ENCODE measurements at regions of chr11 and their contacts with region 1.

Region 1: DNA sequence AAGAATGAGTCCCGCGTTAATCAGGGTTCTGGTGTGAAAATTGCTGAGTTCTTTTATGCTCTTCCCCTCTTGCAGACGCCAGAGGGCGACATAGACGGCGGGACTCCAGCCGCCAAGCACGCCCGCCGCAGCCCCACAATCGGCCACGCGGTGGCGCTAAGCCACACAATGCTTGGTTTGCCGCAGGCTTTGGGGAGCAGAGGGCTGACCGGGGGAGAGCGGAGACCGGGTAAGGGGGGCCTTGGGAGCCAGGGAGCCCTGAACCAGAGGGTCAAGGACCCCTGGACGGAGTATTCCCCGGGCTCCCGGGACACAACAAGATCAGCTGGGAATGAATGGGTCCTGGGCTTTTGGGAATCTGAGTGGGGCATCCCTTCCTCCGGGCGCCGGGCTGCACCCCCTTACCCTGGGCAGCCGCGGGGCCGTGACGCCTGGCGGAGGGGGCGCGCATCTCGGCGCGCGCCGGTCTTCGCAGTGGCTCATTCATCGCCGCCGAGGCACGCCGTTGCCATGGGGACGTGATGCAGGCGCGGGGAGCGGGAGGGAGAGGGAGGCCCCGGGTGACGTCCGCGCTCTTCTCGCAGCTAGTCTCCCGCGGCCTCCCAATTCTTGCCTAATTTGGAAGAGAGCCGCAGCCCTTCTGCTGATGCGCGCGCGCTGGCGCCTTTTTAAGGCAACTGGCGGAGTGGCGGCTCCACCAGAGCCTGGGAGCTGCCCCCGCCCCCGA is 12.2 kb upstream of the NPAS4 start:
- DNase-seq: peak; percentile 93
- H3K4me3 Mint-ChIP-seq: peak overlapping the region; percentile 76
- H3K27ac Mint-ChIP-seq: peak overlapping the region; percentile 60
- H3K4me1 Mint-ChIP-seq: peaks cover 4% of the 10 kb centered on the region
- H3K27me3 Mint-ChIP-seq: peaks cover 48% of the 10 kb centered on the region

Region 2: GRCh38 chr11:66429983-66430602 is 21.4 kb after region 1 on chr11:
- CTCF ChIA-PET with region 1: interaction called, 16 read pairs
- DNase-seq: peak; percentile 85
- H3K4me3 Mint-ChIP-seq: no peak overlapping the region
- H3K27ac Mint-ChIP-seq: no peak overlapping the region
- H3K4me1 Mint-ChIP-seq: no peaks in the 10 kb centered on the region
- H3K27me3 Mint-ChIP-seq: no peaks in the 10 kb centered on the region

Region 3: DNA sequence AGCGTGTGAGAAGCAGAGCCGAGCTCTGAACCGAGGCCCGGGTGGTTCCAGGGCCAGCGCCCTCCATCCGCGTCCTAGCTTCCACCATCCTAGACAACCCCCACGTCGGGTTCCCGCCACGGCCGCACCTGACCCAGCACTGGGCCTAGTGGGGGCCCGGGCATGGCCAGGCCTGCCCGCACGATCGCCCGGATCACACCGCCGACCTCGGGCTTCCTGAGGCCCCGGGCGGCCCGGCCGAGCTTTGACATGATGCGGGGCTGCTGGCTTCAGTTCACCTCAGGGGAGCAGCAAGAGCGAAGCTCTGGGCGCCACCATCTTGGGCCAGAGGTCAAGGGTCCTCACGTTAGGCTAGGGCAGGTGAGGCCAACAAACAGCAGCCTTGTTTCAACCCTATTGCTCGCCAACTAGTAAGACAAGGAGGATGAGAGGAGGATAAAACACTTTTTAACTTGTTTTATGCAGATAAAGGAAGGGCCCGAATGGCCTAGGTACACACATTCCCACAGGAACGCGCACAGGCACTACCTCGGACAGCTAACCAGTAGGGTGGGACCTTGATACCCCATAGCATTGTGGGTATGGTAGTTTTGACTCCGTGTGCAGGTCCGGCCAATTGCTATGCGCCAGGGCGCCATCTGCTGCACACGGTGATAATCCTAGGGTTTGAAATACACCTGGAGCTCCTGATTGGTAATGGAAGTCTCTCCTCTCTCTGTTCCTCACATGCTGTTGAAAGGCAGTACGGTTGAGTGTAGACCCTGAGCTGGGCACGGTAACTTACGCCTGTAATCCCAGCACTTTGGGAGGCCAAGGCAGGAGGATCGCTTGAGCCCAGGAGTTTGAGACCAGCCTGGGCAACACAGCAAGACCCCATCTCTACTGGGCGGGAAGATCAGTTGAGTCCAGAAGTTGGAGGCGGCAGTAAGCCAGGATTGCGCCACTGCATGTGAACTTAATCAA is 30.1 kb after region 1 on chr11 and contains the start of gene MRPL11:
- CTCF ChIA-PET with region 1: interaction called, 18 read pairs
- DNase-seq: peak; percentile 94
- H3K4me3 Mint-ChIP-seq: peak within 1 kb of the TSS; percentile 88
- H3K27ac Mint-ChIP-seq: peak within 1 kb of the TSS; percentile 90
- H3K4me1 Mint-ChIP-seq: peaks cover 19% of the 10 kb centered on the region
- H3K27me3 Mint-ChIP-seq: no peaks in the 10 kb centered on the region

Region 4: GRCh38 chr11:66677599-66678375 is 269.1 kb after region 1 on chr11 and contains the start of gene RBM4B:
- CTCF ChIA-PET with region 1: interaction called, 24 read pairs
- DNase-seq: peak; percentile 97
- H3K4me3 Mint-ChIP-seq: peak within 1 kb of the TSS; percentile 96
- H3K27ac Mint-ChIP-seq: peak within 1 kb of the TSS; percentile 99
- H3K4me1 Mint-ChIP-seq: peaks cover 39% of the 10 kb centered on the region
- H3K27me3 Mint-ChIP-seq: peaks cover 3% of the 10 kb centered on the region

Measured in activated naive CD4-positive, alpha-beta T cell treated with anti-CD3 and anti-CD28 coated beads, Interleukin-2, amount 10 ng/mL, durations not matched to agents 7 days and 5 days (primary cell).